Left ventricle myocardium superior (tissue), 1 donor: ENCODE measurements at regions of chr7 and their contacts with region 1.

Region 1: GRCh38 chr7:95316588-95316987 is 7.7 kb downstream of the PON1 start:
- DNase-seq: no peak
- ATAC-seq: no peak

Region 2: DNA sequence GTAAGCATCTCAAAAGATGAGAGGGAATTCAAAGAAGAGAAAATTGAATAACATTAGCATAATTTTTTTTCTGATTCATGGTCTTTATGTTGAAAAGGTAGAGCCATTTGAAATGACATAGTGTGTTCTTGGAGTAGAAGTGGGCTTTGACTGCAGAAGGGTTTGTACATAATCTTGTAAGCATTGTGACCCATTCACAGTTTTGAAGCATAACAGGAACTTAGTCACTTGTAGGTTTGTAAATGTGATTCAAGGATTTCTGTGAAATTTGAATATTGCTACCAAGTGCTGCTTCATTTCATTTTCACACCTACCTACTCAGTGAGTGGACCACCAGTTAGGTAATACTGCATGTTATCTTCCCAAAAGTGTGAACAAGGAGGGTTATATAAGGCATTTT is 60.9 kb before region 1 on chr7:
- intact Hi-C with region 1: no loop called
- DNase-seq: no peak
- ATAC-seq: no peak

Region 3: DNA sequence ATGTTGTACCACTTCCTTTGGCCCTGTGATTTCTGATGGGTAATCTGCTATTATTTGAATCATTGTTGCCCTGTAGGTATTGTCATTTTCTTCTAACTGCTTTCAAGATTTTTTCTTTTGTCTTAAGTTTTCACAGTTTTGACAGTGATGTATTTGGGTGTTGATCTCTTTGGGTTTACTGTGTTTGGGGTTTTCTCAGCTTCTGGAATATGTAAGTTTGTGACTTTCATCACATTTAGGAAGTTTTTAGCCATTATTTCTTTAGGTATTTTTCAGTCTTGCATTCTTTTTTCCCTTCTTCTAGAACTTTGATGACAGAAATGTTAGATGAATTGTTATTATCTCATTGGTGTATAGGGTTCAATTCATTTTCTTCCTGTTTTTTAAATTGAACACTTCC is 141.4 kb after region 1 on chr7:
- intact Hi-C with region 1: no loop called
- DNase-seq: no peak
- ATAC-seq: no peak

Region 4: GRCh38 chr7:95476904-95477594 is 160.5 kb after region 1 on chr7:
- intact Hi-C with region 1: loop called (anchors 10 kb)
- DNase-seq: peak; percentile 54
- ATAC-seq: peak; percentile 76